ENCODE measurements at regions of chr11 and their contacts with region 1.

Region 1: GRCh38 chr11:118746988-118747585 is 43.9 kb downstream of the DDX6 start:
- DNase-seq: no peak
- H3K4me3 Mint-ChIP-seq: no peak overlapping the region
- H3K27ac Mint-ChIP-seq: no peak overlapping the region
- H3K4me1 Mint-ChIP-seq: no peaks in the 10 kb centered on the region
- H3K27me3 Mint-ChIP-seq: no peaks in the 10 kb centered on the region

Region 2: DNA sequence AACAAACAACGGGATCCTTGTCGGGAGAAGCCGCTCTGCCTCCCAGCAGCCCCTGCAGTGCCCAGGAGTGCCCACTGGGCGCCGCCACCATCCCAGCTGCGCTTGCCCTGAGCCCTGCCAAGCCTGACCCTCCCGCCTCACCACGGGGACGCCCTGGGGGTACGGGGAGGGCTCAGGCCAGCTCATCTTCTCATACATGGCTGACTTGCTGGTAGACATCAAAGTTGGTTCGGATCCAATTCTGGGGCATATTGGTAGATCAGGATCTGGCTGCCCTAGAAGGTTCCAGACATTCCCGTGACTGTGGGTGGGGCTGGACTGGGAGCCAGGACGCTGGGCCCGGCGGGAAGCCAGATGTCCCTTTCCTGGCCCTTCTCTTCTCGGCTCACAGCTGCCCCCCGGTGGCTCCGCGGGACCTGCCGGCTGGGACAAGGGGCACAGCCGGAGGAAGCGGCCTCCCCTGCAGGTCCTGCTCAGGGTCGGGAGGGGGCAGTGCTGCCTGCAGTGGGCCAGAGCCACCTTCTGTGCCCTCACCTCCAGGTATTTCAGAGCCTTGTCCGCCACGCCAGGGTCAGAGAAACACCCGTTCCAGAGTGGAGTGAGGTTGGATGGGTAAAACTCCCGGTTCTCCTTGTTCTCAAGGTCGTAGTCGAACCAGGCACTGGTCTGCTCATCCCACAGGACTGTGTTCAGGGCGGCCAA is 57.1 kb before region 1 on chr11:
- intact Hi-C with region 1: loop called (anchors 5 kb)
- DNase-seq: peak; percentile 75
- H3K4me3 Mint-ChIP-seq: peak overlapping the region; percentile 68
- H3K27ac Mint-ChIP-seq: no peak overlapping the region
- H3K4me1 Mint-ChIP-seq: peaks cover 26% of the 10 kb centered on the region
- H3K27me3 Mint-ChIP-seq: peaks cover 11% of the 10 kb centered on the region

Measured in activated T-helper 2 cell treated with anti-CD3 and anti-CD28 coated beads, Interferon-gamma antibody, Interleukin-2, Interleukin-4, amounts not matched to agents 10 μg/mL and 5 μg/mL and 100 μg/mL, durations not matched to agents 14 hours and 24 hours and 36 hours (primary cell).